Activated CD4-positive, alpha-beta T cell treated with anti-CD3 and anti-CD28 coated beads, Interleukin-2, amount 10 ng/mL, durations not matched to agents 24 days and 14 days (primary cell): ENCODE measurements at regions of chr9 and their contacts with region 1.

Region 1: GRCh38 chr9:21357479-21358460 is 7.1 kb upstream of the IFNA6 start:
- DNase-seq: peak; percentile 77
- H3K4me3 Mint-ChIP-seq: peak overlapping the region; percentile 58
- H3K27ac Mint-ChIP-seq: peak overlapping the region; percentile 83
- H3K4me1 Mint-ChIP-seq: peaks cover 14% of the 10 kb centered on the region
- H3K27me3 Mint-ChIP-seq: peaks cover 50% of the 10 kb centered on the region

Region 2: GRCh38 chr9:21317956-21318923 is 39.5 kb before region 1 on chr9:
- intact Hi-C with region 1: no loop called
- DNase-seq: peak; percentile 77
- H3K4me3 Mint-ChIP-seq: no peak overlapping the region
- H3K27ac Mint-ChIP-seq: no peak overlapping the region
- H3K4me1 Mint-ChIP-seq: no peaks in the 10 kb centered on the region
- H3K27me3 Mint-ChIP-seq: peaks cover 18% of the 10 kb centered on the region

Region 3: GRCh38 chr9:21334701-21335632 is 22.8 kb before region 1 on chr9 and contains the start of gene KLHL9:
- intact Hi-C with region 1: loop called (anchors 1 kb)
- DNase-seq: peak; percentile 94
- H3K4me3 Mint-ChIP-seq: peak within 1 kb of the TSS; percentile 92
- H3K27ac Mint-ChIP-seq: peak within 1 kb of the TSS; percentile 90
- H3K4me1 Mint-ChIP-seq: peaks cover 33% of the 10 kb centered on the region
- H3K27me3 Mint-ChIP-seq: peaks cover 15% of the 10 kb centered on the region
- total RNA-seq, gene KLHL9: 14.8 and 15.0 TPM in 2 replicates

Region 4: DNA sequence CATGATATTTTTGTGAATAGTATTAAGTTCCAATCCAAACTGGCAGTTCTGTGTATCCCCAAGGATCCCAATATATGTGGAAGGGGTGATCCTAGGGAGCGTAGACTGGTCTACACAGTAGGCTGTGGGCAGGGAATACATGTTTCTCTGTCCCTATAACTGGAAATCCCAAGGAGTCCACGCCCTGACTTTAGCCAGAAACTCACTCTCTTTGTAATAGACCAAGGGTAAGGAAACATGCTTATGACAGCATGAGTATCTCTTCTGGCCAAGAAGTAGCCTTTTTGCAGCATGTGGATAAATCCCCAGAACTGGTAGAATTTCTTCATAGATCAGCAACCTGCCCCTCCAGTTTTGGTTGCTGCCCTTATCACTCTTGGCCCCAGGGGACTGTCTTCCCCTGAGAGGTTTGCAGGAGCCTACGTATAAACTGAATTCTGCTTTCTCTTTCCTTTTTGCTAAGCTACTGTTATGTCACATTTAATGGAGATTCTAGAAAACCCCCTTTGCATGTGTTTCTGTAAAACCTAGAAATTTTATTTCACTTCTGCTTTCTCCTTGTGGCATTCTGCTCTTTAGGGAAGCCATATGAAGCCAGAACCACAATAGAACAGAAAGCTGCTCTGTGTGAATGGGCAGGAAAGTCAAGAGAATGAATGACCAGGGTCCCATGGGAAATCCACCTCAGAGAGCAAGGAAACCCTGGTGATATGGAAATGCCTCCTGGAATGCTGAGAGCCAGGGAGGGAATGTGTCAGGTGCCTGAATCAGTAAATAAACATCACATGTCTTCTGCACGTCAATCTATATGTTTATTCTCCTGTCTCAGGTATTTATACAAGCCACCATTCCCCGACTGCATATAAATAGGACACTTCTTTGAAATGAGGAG is 23.9 kb after region 1 on chr9:
- intact Hi-C with region 1: loop called (anchors 1 kb)
- DNase-seq: peak; percentile 74
- H3K4me3 Mint-ChIP-seq: no peak overlapping the region
- H3K27ac Mint-ChIP-seq: no peak overlapping the region
- H3K4me1 Mint-ChIP-seq: peaks cover 11% of the 10 kb centered on the region
- H3K27me3 Mint-ChIP-seq: peaks cover 51% of the 10 kb centered on the region

Region 5: DNA sequence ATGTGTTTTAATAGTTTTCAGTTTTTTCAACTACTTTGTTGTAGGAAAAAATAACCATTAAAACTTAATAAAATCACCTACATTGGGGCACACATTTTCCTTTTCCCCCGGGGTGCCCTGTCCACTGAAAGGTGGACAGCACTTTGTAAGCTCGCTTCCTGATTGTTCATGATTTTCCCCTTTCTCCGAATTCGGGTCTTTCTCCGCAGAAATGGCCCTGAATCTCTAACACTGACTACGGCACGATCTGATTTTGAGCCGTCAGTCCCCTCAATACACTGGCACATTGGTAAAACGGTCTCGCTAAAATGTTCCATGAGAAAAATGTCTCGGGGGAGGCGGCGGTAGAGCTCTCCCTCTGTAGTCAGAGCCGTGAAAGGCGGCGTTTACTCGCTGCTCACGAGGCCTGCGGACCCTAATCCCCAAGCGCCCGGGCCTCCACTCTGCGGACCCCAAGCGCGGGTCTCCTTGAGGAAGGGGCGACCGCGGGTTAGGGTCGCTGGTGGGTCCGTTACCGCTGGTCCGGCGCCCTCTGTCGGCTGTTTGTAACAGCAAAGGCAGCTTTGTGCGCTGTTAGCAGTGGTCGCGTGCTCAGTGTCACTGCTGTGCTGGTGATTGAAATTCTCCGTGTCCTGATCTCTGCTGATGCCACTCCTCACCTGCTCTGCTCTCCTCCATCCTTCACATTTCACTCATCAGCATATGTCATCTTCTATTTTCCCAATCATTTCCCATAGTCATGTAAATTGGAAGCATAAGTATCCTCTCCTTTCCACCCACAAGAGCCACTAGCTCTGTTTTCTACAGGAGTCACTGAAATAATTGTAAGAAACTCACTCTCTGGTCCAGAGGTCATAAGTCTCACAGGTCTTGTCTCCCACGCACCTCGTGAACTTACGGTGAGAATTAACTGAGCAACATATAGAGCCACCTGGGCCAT is 38.3 kb after region 1 on chr9:
- intact Hi-C with region 1: loop called (anchors 5 kb)
- DNase-seq: peak; percentile 86
- H3K4me3 Mint-ChIP-seq: peak overlapping the region; percentile 45
- H3K27ac Mint-ChIP-seq: no peak overlapping the region
- H3K4me1 Mint-ChIP-seq: peaks cover 4% of the 10 kb centered on the region
- H3K27me3 Mint-ChIP-seq: peaks cover 74% of the 10 kb centered on the region

Region 6: GRCh38 chr9:21591221-21592062 is 233.7 kb after region 1 on chr9:
- intact Hi-C with region 1: loop called (anchors 10 kb)
- DNase-seq: peak; percentile 79
- H3K4me3 Mint-ChIP-seq: peak overlapping the region; percentile 1
- H3K27ac Mint-ChIP-seq: peak overlapping the region; percentile 15
- H3K4me1 Mint-ChIP-seq: peaks cover 16% of the 10 kb centered on the region
- H3K27me3 Mint-ChIP-seq: peaks cover 10% of the 10 kb centered on the region

Region 7: GRCh38 chr9:21883642-21884041 is 525.9 kb after region 1 on chr9:
- intact Hi-C with region 1: no loop called
- DNase-seq: no peak
- H3K4me3 Mint-ChIP-seq: no peak overlapping the region
- H3K27ac Mint-ChIP-seq: no peak overlapping the region
- H3K4me1 Mint-ChIP-seq: peaks cover 5% of the 10 kb centered on the region
- H3K27me3 Mint-ChIP-seq: no peaks in the 10 kb centered on the region

Region 8: GRCh38 chr9:22052376-22052945 is 694.7 kb after region 1 on chr9:
- intact Hi-C with region 1: loop called (anchors 10 kb)
- DNase-seq: peak; percentile 79
- H3K4me3 Mint-ChIP-seq: peak overlapping the region; percentile 42
- H3K27ac Mint-ChIP-seq: peak overlapping the region; percentile 62
- H3K4me1 Mint-ChIP-seq: peaks cover 32% of the 10 kb centered on the region
- H3K27me3 Mint-ChIP-seq: peaks cover 20% of the 10 kb centered on the region